Activated CD4-positive, alpha-beta memory T cell treated with anti-CD3 and anti-CD28 coated beads for 36 hours (primary cell): ENCODE measurements at regions of chr2 and their contacts with region 1.

Region 1: GRCh38 chr2:120174963-120175581 is 48.1 kb downstream of the TMEM185B start:
- DNase-seq: no peak
- H3K4me3 Mint-ChIP-seq: no peak overlapping the region
- H3K27ac Mint-ChIP-seq: no peak overlapping the region
- H3K4me1 Mint-ChIP-seq: peaks cover 44% of the 10 kb centered on the region
- H3K27me3 Mint-ChIP-seq: no peaks in the 10 kb centered on the region

Region 2: DNA sequence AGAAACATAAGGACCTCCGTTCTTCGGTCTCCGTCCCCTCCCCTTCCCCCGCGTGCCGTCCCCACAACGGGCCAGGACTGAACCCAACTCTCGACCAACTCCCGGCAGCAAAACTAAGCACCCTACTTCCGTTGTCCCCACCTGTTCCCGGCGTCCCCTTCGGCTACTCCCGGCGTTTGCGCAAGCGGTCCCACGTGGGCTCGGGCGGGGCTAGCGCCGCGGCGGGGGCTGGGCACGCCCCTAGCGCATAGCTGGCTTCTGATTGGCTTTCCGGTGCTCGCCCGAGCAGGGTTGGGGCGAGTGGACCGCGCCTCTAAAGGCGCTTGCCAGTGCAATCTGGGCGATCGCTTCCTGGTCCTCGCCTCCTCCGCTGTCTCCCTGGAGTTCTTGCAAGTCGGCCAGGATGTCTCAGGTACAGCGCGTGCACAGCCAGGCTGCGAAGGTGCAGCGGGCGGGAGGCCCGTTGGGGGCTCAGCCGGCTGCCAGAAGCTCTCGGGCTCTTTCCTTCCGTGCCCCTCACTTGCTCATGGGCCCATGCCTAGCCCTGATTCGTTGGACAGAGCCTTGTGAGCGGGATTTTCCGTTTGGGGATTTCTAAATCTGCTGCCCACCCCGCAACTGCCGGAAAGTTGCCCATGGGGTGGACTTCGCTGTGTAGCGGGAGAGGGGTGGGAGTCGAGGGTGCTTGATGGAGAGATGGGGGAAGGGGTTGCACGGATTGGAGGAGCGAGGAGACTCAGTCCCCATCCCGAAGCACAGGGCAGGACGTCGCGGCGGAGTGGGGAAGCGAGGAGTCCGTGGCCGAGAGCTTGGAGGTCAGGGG is 808.2 kb before region 1 on chr2 and contains the starts of genes C2orf76 and DBI:
- CTCF ChIA-PET with region 1: no interaction called
- POLR2A ChIA-PET with region 1: interaction called, 5 read pairs
- intact Hi-C with region 1: loop called (anchors 2 kb)
- DNase-seq: peak; percentile 96
- H3K4me3 Mint-ChIP-seq: peak within 1 kb of the TSS; percentile 100
- H3K27ac Mint-ChIP-seq: peak within 1 kb of the TSS; percentile 96
- H3K4me1 Mint-ChIP-seq: peaks cover 33% of the 10 kb centered on the region
- H3K27me3 Mint-ChIP-seq: no peaks in the 10 kb centered on the region
- total RNA-seq, gene C2orf76: 10.5 to 11.5 TPM
- total RNA-seq, gene DBI: 149 to 150 TPM

Region 3: DNA sequence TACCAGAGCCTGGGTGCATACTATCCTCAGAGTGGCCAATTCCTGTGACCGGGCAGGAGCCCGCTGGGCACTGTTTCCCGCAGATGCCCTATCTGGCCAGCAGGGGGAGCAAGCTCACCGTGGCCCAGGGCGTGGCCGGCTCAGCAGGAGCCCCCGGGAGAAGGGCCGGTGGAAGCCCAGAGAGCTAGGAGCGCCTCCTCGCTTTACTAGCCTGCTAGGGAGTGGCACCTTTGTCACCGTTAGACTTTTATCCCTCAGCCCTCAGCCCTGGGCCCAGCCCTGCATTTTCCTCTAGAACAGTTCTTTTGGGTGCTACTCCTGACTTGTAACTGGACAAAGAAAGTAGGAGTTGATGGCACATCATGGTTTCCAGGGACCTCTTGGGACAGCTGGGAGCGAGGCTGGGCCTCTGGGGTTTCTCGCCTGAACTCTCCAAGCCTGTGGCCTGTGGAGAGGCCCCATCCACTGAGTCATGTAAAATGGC is 472.1 kb before region 1 on chr2:
- CTCF ChIA-PET with region 1: interaction called, 98 read pairs
- POLR2A ChIA-PET with region 1: interaction called, 5 read pairs
- intact Hi-C with region 1: loop called (anchors 1 kb)
- DNase-seq: peak; percentile 80
- H3K4me3 Mint-ChIP-seq: no peak overlapping the region
- H3K27ac Mint-ChIP-seq: no peak overlapping the region
- H3K4me1 Mint-ChIP-seq: peaks cover 19% of the 10 kb centered on the region
- H3K27me3 Mint-ChIP-seq: no peaks in the 10 kb centered on the region

Region 4: DNA sequence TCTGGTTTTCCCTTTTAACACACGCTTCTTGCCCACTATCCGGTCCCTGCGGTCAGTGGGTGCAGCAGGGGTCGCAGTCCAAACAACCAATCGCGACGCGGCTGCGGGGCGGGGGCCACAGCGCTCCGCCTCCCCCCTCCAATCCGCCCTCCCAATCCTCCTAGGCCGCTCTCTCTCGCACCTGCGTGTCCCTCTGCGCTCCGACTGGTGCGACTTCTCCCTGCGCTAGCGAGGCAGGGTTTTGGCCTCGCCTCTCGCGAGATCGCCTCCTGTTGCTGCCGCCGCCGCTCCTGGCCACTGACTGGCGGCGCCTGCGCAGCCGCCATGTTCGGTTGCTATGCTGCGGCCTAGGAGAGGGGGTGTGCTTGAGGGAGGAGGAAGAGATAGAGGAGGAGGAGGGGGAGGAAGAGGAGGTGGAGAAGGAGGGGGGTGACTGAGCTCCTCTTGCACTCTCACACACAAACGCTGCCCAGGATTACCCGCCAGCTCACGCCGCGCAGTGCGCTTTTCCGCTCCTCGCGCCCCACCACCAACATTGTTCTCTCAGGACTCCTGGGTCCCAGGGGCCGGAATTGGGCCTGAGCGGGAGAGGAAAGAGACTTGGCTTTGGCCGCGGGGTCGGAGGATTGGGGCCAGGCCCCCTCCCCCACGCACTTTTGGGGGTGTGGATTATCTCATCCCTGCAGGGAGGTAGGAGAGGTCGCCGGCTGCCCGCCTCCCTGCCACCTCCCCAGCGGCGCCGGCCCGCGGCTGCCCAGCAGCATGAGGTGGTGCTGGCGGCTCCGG is 415.4 kb before region 1 on chr2 and contains the start of gene PTPN4:
- CTCF ChIA-PET with region 1: interaction called, 41 read pairs
- POLR2A ChIA-PET with region 1: interaction called, 3 read pairs
- intact Hi-C with region 1: loop called (anchors 1 kb)
- DNase-seq: peak; percentile 98
- H3K4me3 Mint-ChIP-seq: peak within 1 kb of the TSS; percentile 89
- H3K27ac Mint-ChIP-seq: peak within 1 kb of the TSS; percentile 93
- H3K4me1 Mint-ChIP-seq: peaks cover 48% of the 10 kb centered on the region
- H3K27me3 Mint-ChIP-seq: no peaks in the 10 kb centered on the region
- total RNA-seq, gene PTPN4: 29.4 to 31.6 TPM

Region 5: DNA sequence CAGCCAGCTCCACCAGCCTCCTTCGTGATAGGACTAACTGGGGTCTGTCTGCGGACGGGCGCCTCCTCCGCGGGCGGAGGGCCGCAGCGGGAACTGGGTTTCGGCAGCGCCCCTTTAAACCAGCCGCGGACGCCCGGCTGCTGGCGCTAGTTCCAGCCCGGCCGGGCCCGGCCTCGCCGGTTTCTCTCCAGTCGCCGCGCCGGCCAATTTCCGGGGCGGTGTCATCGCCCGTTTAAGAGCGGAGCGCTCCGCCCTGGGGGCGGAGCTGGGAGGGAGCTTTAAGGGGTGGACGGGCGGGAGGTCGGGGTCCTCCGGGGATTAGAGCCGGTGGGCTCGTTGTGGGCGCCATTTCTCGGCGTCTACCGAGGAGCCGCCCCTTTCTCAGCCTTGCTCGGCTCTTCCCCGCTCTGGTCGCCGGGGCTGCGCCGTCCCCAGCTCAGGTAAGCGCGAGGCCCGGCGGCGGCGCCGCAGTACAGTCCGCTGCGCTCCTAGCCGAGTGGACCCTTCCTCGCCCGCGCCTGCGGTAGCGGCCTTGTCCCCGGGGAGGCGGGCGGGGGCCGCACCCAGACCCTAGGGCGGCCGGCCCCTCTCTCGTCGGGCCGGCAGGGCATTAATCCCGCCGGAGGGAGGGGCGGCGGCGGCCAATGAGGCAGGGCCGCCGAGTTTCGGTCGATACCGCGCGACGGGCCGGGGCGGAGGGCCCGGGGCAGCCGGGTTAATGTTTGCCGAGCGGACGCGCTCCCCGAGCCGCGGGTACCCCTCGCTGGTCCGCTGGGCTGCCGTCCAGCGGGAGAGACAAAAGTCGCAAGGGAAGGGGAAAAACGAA is 162.1 kb before region 1 on chr2 and contains the start of gene EPB41L5:
- CTCF ChIA-PET with region 1: interaction called, 17 read pairs
- POLR2A ChIA-PET with region 1: interaction called, 3 read pairs
- intact Hi-C with region 1: loop called (anchors 2 kb)
- DNase-seq: peak; percentile 87
- H3K4me3 Mint-ChIP-seq: peak within 1 kb of the TSS; percentile 73
- H3K27ac Mint-ChIP-seq: no peak within 1 kb of the TSS
- H3K4me1 Mint-ChIP-seq: peaks cover 10% of the 10 kb centered on the region
- H3K27me3 Mint-ChIP-seq: peaks cover 1% of the 10 kb centered on the region
- total RNA-seq, gene EPB41L5: 2.5 to 2.7 TPM

Region 6: DNA sequence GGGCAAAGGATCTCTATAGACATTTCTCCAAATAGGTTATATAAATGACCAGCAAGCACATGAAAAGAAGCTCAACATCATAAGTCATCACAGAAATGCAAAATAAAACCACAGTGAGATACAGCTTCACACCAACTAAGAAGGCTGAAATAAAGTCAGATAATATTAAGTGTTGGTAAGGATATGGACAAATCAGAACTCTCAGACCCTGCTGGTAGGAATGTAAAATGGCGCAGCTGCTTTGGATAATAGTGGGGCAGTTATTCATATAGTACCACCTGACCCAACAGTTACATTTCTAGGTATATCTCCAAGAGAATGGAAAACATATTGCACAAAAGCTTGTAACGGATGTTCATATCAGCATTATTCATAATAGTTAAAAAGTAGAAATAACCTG is 148.2 kb before region 1 on chr2:
- CTCF ChIA-PET with region 1: no interaction called
- POLR2A ChIA-PET with region 1: no interaction called
- intact Hi-C with region 1: no loop called
- DNase-seq: no peak
- H3K4me3 Mint-ChIP-seq: no peak overlapping the region
- H3K27ac Mint-ChIP-seq: no peak overlapping the region
- H3K4me1 Mint-ChIP-seq: no peaks in the 10 kb centered on the region
- H3K27me3 Mint-ChIP-seq: no peaks in the 10 kb centered on the region

Region 7: GRCh38 chr2:120223034-120223912 is 48.2 kb after region 1 on chr2 and contains the start of gene TMEM185B:
- CTCF ChIA-PET with region 1: interaction called, 11 read pairs
- POLR2A ChIA-PET with region 1: interaction called, 3 read pairs
- intact Hi-C with region 1: loop called (anchors 1 kb)
- DNase-seq: peak; percentile 95
- H3K4me3 Mint-ChIP-seq: peak within 1 kb of the TSS; percentile 81
- H3K27ac Mint-ChIP-seq: peak within 1 kb of the TSS; percentile 83
- H3K4me1 Mint-ChIP-seq: peaks cover 52% of the 10 kb centered on the region
- H3K27me3 Mint-ChIP-seq: no peaks in the 10 kb centered on the region
- total RNA-seq, gene TMEM185B: 19.4 to 19.7 TPM

Region 8: DNA sequence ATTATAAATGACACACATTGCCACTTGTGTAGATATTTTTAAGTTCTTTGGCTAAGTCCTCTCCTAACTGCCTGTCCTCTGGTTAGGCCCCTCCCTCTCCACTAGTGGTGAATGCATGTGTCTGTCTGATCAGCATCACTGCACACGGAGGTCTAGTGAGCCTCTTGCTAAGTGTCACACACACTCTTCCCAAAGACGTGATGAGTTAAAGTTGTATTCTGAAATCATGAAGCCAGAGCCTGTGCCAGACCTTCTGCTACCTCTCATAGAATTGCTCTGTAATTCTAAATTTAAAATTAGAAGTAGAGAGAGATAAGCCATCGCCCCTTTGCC is 118.9 kb after region 1 on chr2:
- CTCF ChIA-PET with region 1: interaction called, 12 read pairs
- POLR2A ChIA-PET with region 1: no interaction called
- intact Hi-C with region 1: no loop called
- DNase-seq: no peak
- H3K4me3 Mint-ChIP-seq: no peak overlapping the region
- H3K27ac Mint-ChIP-seq: no peak overlapping the region
- H3K4me1 Mint-ChIP-seq: peaks cover 7% of the 10 kb centered on the region
- H3K27me3 Mint-ChIP-seq: no peaks in the 10 kb centered on the region

Region 9: DNA sequence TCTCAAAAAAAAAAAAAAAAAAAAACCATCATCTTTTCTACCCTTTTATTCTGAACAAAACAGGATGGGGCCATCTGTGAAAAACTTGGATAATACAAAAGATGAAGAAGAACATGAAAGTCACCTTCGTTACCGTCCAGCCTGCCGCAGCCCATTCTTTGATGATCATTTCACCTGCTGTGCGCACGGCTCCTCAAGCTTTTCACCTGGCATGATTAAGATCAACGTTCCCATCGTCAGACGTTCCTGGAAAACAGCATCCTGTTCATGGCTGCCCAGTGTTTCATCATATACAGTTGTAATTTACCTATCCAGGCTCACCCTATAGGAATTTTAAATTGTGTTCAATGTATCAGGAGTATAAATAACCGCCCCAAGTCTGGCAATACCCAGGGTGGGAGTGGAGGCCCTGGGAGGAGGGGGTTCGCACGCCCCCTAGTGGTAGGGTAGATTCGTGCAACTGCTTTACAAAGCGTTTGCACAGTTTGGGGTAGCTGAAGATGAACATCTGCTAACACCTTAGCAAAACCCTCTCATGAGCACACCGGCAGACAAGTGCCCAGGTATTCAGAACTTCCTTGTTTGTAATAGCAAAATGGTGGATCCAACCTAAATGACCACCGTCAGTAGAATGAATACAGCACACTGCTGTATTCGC is 511.6 kb after region 1 on chr2:
- CTCF ChIA-PET with region 1: no interaction called
- POLR2A ChIA-PET with region 1: no interaction called
- intact Hi-C with region 1: no loop called
- DNase-seq: no peak
- H3K4me3 Mint-ChIP-seq: no peak overlapping the region
- H3K27ac Mint-ChIP-seq: no peak overlapping the region
- H3K4me1 Mint-ChIP-seq: no peaks in the 10 kb centered on the region
- H3K27me3 Mint-ChIP-seq: peaks cover 5% of the 10 kb centered on the region